ENCODE measurements at regions of chr3 and their contacts with region 1.

Region 1: DNA sequence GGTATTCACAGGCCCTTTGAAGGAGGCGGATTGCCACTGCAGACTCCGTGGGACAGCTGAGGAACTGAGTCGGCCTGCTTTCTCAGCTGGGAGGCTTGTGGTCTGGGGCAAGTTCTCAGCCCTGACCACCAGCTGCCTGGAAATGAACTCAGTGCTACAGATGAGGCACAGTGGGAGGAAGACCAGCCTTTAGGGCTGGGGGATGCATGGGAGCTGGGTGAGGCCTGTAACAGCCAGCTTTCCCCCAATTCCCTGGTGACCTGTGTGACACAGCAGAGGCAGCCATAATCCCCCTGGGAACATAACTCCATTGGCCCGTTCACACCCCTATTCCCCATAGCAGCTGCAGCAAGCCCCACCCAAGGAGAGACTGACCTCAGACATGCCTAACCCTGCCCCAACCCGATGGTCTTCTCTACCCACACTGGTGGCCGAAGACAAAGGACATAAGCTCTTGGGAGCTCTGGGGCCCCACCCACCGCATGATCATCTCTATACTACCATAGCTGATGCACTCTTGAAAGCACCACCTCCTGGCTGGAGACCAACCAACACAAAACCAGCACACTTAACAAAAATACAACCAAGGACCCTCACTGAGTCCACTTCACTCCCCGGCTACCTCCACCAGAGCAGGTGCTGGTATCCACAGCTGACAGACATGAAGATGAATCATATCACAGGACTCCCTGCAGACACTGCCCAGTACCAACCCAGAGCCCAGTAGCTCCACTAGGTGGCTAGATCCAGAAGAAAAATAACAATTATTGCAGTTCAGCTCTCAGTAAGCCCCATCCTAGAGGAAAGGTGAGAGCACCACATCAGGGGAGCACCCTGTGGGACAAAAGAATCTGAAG is 24.9 kb downstream of the ZMAT3 start:
- DNase-seq: peak; percentile 89
- ATAC-seq: peak; percentile 86
- H3K4me3 ChIP-seq: peak overlapping the region; percentile 10; the same call in 1 of the 2 replicates
- H3K27ac ChIP-seq: peak overlapping the region; percentile 84
- H3K4me1 ChIP-seq: peaks cover 22% of the 10 kb centered on the region
- H3K27me3 ChIP-seq: no peaks in the 10 kb centered on the region
- CTCF ChIP-seq: peak; percentile 8 to 30 (median 24); a peak in 1 of 6 replicates
- EP300 ChIP-seq: peak in 1 of 2 experiments; percentile 75; a peak in 2 of 4 replicates
- POLR2A ChIP-seq: peak; percentile 40
- RAD21 ChIP-seq: no peak

Region 2: DNA sequence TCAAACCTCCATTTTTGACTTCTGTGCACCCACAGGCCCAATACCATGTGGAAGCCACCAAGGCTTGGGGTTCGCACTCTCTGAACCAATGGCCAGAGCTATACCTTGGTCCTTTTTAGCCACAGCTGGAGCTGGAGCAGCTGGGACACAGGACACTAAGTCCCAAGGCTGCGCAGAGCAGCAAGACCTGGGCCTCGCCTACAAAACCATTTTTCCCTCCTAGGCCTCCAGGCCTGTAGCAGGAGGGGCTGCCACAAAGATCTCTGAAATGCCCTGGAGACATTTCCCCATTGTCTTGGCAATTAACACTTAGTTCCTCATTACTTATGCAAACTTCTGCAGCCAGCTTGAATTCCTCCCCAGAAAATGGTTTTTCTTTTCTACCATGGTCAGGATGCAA is 56.4 kb before region 1 on chr3:
- CTCF ChIA-PET with region 1: no interaction called
- POLR2A ChIA-PET with region 1: no interaction called
- RAD21 ChIA-PET with region 1: no interaction called
- SMC1A ChIA-PET with region 1: no interaction called
- in situ Hi-C with region 1: no loop called
- intact Hi-C with region 1: no loop called
- DNase-seq: no peak
- ATAC-seq: no peak
- H3K4me3 ChIP-seq: no peak overlapping the region
- H3K27ac ChIP-seq: no peak overlapping the region
- H3K4me1 ChIP-seq: no peaks in the 10 kb centered on the region
- H3K27me3 ChIP-seq: no peaks in the 10 kb centered on the region
- CTCF ChIP-seq: no peak
- EP300 ChIP-seq: no peak
- POLR2A ChIP-seq: no peak
- RAD21 ChIP-seq: no peak

Region 3: GRCh38 chr3:179027326-179027900 is 19.3 kb before region 1 on chr3:
- CTCF ChIA-PET with region 1: interaction called, 7 read pairs
- POLR2A ChIA-PET with region 1: interaction called, 4 read pairs
- RAD21 ChIA-PET with region 1: interaction called, 7 read pairs
- SMC1A ChIA-PET with region 1: interaction called, 31 read pairs
- in situ Hi-C with region 1: no loop called
- intact Hi-C with region 1: no loop called
- DNase-seq: no peak
- ATAC-seq: no peak
- H3K4me3 ChIP-seq: no peak overlapping the region
- H3K27ac ChIP-seq: no peak overlapping the region
- H3K4me1 ChIP-seq: no peaks in the 10 kb centered on the region
- H3K27me3 ChIP-seq: no peaks in the 10 kb centered on the region
- CTCF ChIP-seq: no peak
- EP300 ChIP-seq: no peak
- POLR2A ChIP-seq: no peak
- RAD21 ChIP-seq: no peak

Region 4: DNA sequence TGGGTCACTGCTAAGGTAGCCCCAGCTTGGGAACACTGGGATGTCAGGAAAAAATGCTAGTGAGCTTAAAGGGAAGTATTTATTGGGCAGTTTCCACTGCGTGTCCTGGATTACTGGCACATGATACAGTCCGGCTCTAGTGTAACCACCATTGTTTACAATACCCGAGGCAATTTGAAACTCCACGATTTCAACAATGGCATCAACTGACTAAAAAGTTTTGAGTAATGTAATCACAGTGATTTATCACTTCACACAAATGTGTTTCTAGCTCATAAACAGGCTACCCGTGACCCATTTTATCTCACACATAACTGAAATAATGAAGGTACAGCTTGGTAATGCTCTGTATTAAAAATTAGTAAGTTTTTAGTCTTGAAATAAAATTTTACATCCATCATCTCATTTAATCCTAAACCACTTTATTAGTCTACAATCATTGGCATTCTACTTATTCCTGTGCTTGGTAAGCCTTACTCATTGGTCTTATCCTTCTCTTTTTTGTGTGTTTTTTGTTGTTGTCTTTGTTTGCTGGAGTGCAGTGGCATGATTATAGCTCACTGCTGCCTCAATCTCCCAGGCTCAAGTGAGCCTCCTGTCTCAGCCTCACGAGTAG is 17.3 kb after region 1 on chr3:
- CTCF ChIA-PET with region 1: interaction called, 124 read pairs
- POLR2A ChIA-PET with region 1: interaction called, 138 read pairs
- RAD21 ChIA-PET with region 1: interaction called, 231 read pairs
- SMC1A ChIA-PET with region 1: interaction called, 225 read pairs
- in situ Hi-C with region 1: no loop called
- intact Hi-C with region 1: loop called (anchors 2 kb)
- DNase-seq: no peak
- ATAC-seq: no peak
- H3K4me3 ChIP-seq: peak overlapping the region; percentile 28; the same call in 1 of the 2 replicates
- H3K27ac ChIP-seq: no peak overlapping the region
- H3K4me1 ChIP-seq: no peaks in the 10 kb centered on the region; the same call in 1 of the 2 replicates
- H3K27me3 ChIP-seq: no peaks in the 10 kb centered on the region
- CTCF ChIP-seq: no peak
- EP300 ChIP-seq: no peak
- POLR2A ChIP-seq: no peak
- RAD21 ChIP-seq: no peak

Region 5: GRCh38 chr3:179091113-179091512 is 44.4 kb after region 1 on chr3:
- CTCF ChIA-PET with region 1: no interaction called
- POLR2A ChIA-PET with region 1: no interaction called
- RAD21 ChIA-PET with region 1: no interaction called
- SMC1A ChIA-PET with region 1: no interaction called
- in situ Hi-C with region 1: no loop called
- intact Hi-C with region 1: no loop called
- DNase-seq: no peak
- ATAC-seq: peak; percentile 77
- H3K4me3 ChIP-seq: no peak overlapping the region
- H3K27ac ChIP-seq: no peak overlapping the region
- H3K4me1 ChIP-seq: no peaks in the 10 kb centered on the region
- H3K27me3 ChIP-seq: no peaks in the 10 kb centered on the region
- CTCF ChIP-seq: no peak
- EP300 ChIP-seq: no peak
- POLR2A ChIP-seq: no peak
- RAD21 ChIP-seq: no peak